ENCODE measurements at regions of chr13 and their contacts with region 1.

Region 1: DNA sequence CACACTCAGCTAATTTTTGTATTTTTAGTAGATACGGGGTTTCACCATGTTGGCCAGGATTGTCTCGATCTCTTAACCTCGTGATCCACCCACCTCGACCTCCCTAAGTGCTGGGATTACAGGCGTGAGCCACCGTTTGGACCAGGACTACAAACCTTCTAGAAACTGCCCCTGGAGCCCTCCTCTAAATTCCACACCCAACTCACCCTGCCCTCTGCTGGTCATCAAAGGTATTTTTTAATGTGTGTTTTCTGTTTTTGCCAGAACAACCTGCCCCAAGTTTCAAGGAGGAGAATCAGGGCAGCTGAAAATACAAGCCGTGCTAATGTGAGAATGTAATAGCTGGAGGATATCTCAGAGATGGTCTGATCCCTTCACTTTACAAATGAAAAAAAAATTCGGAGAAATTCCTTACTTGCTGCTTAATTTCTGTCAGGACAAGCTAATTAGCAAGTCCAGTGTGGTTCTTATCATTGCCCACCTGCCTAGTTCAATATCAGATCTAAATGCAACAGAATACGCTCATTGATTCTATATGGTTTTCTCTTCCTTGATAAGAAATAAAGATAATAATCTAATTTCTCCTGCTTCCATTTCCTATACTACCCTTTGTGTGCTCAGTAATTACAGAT is 4.1 kb downstream of the ATP8A2 start:
- DNase-seq: peak in 1 of 2 donors; percentile 13
- ATAC-seq: peak in 1 of 8 donors; percentile 34
- H3K4me3 ChIP-seq: no peak overlapping the region
- H3K27ac ChIP-seq: no peak overlapping the region
- H3K4me1 ChIP-seq: peaks cover 0 to 12% (median 0%) of the 10 kb centered on the region in 9 donors
- H3K27me3 ChIP-seq: peaks cover 14 to 67% (median 49%) of the 10 kb centered on the region in 7 donors
- CTCF ChIP-seq: peak; percentile 15 to 70 (median 61)

Region 2: GRCh38 chr13:25225970-25226369 is 149.9 kb before region 1 on chr13:
- intact Hi-C with region 1: loop called in 5 of 10 experiments (anchors 10 kb)
- DNase-seq: no peak
- ATAC-seq: no peak
- H3K4me3 ChIP-seq: no peak overlapping the region
- H3K27ac ChIP-seq: no peak overlapping the region
- H3K4me1 ChIP-seq: no peaks in the 10 kb centered on the region
- H3K27me3 ChIP-seq: peaks cover 0 to 38% (median 11%) of the 10 kb centered on the region in 7 donors
- CTCF ChIP-seq: no peak

Region 3: GRCh38 chr13:25232937-25233515 is 142.8 kb before region 1 on chr13:
- intact Hi-C with region 1: loop called in 5 of 10 experiments (anchors 10 kb)
- DNase-seq: no peak
- ATAC-seq: peak in 2 of 8 donors; percentile 47 to 59
- H3K4me3 ChIP-seq: no peak overlapping the region
- H3K27ac ChIP-seq: no peak overlapping the region
- H3K4me1 ChIP-seq: peaks cover 0 to 5% (median 0%) of the 10 kb centered on the region in 9 donors
- H3K27me3 ChIP-seq: peaks cover 0 to 13% (median 2%) of the 10 kb centered on the region in 7 donors
- CTCF ChIP-seq: peak in 8 of 9 donors; percentile 46 to 67 (median 60)

Measured in heart right ventricle (tissue), 16 donors.